ENCODE measurements at regions of chr5 and their contacts with region 1.

Region 1: DNA sequence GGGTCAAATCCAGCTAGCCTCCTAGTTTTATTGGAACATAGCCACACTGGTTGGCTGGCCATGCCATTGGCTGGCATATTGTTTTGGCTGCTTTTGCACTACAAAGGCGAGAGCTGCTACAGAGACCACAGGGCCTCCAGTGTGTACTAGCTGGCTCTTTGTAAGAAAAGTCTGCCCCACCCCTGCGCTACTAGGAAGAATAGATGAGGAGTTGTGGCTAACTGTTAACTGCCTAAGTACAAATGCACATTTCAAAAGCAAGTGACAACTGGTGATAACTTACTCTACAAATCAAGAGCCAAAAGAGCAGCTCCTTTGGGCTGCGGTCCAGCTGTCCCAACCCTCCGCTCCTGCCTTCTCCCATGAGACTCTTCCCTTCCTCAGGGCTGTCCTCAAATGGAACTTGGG is 63.9 kb downstream of the SERINC5 start:
- DNase-seq: peak; percentile 63
- H3K4me3 Mint-ChIP-seq: peak overlapping the region; percentile 61
- H3K27ac Mint-ChIP-seq: peak overlapping the region; percentile 92
- H3K4me1 Mint-ChIP-seq: peaks cover 78% of the 10 kb centered on the region
- H3K27me3 Mint-ChIP-seq: no peaks in the 10 kb centered on the region

Region 2: DNA sequence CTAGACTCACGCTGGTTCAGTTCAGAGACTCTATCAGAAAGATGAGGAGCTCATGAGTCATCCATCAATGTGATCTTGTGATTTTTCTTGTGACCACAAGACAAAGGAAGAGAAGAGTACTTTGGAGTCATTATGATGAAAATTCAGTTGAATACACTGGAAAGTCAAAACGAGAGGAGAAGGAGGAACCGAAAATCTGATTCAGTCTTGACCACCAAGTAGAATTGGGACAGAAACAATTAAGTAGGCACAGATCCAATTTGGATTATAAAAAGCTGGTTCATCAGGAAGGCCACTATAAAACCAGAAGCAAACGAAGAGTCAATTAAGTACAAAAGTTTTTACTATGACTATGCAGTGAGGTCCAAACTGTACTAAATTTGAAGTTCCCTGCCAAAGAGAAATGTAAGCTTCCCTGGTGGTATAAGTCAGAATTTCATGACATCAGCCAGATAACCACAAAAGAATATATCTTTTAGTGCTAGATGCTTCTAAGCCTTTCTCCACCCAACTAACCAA is 66.0 kb before region 1 on chr5:
- CTCF ChIA-PET with region 1: no interaction called
- POLR2A ChIA-PET with region 1: interaction called, 6 read pairs
- intact Hi-C with region 1: loop called (anchors 1 kb)
- DNase-seq: peak; percentile 28
- H3K4me3 Mint-ChIP-seq: peak overlapping the region; percentile 51
- H3K27ac Mint-ChIP-seq: peak overlapping the region; percentile 70
- H3K4me1 Mint-ChIP-seq: peaks cover 52% of the 10 kb centered on the region
- H3K27me3 Mint-ChIP-seq: no peaks in the 10 kb centered on the region

Region 3: DNA sequence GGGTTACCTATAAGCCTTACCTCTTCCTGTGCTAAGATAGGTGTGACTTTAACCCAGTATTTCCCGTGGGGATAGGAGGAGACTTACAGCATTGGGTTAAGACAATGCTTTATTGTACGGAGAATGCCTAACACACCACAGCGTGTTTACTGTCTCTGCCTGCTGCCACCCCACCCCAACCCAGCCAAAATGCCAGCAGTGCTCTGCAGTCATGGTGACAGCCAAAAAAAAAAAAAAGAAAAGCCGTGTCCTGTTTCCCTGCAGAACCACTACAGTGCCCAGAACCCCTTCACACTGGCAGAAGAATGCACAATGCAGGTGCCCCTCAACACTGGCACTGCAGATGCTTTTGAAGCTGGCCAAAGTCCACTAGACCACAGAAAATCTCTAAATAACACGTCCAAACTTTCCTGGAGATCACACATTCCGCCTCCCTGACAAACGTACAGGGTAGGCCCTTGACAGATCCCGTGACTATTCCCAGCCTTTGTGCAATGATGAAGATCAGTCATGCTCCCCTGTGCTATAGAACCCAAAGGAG is 38.3 kb before region 1 on chr5:
- CTCF ChIA-PET with region 1: no interaction called
- POLR2A ChIA-PET with region 1: interaction called, 3 read pairs
- intact Hi-C with region 1: loop called (anchors 2 kb)
- DNase-seq: no peak
- H3K4me3 Mint-ChIP-seq: no peak overlapping the region
- H3K27ac Mint-ChIP-seq: peak overlapping the region; percentile 90
- H3K4me1 Mint-ChIP-seq: peaks cover 60% of the 10 kb centered on the region
- H3K27me3 Mint-ChIP-seq: no peaks in the 10 kb centered on the region

Region 4: DNA sequence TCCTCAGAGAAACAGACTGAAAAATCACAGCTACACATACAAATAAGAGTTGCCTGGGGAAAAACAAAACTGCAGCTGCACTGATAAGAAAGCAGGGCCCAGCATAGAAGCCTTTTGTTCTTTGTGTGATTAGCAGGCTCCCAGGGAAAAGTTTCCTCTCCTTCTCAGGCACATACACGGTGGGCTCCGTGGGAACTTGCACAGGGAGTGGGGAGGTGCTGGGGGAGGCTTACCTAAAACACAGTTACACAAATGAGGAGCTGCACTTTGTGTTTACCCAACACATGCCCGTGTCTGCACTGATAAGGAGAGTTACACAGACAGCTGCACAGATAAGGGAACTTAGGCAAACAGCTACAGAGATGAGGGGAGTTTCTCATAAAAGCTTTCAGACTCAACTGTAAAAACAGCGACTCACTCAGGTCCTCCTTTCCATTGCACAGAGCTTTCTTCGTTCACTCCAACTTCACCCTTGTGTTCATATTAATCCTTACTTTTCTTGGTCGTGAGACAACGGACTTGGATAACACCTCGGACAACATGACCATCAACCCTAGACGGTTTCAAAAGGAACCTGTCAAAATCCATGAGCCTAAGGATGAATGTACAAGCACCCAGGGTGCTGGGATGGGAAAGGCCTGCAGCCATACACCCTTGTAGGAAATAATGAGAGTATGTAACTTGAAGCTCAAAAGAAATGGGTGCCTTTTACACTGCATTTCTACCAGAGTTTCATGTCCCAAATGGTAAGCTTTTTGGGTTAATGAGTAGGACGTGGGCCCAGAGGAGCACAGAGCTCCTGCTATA is 13.0 kb after region 1 on chr5:
- CTCF ChIA-PET with region 1: interaction called, 46 read pairs
- POLR2A ChIA-PET with region 1: interaction called, 36 read pairs
- intact Hi-C with region 1: loop called (anchors 1 kb)
- DNase-seq: peak; percentile 33
- H3K4me3 Mint-ChIP-seq: peak overlapping the region; percentile 24
- H3K27ac Mint-ChIP-seq: peak overlapping the region; percentile 88
- H3K4me1 Mint-ChIP-seq: peaks cover 83% of the 10 kb centered on the region
- H3K27me3 Mint-ChIP-seq: no peaks in the 10 kb centered on the region

Region 5: DNA sequence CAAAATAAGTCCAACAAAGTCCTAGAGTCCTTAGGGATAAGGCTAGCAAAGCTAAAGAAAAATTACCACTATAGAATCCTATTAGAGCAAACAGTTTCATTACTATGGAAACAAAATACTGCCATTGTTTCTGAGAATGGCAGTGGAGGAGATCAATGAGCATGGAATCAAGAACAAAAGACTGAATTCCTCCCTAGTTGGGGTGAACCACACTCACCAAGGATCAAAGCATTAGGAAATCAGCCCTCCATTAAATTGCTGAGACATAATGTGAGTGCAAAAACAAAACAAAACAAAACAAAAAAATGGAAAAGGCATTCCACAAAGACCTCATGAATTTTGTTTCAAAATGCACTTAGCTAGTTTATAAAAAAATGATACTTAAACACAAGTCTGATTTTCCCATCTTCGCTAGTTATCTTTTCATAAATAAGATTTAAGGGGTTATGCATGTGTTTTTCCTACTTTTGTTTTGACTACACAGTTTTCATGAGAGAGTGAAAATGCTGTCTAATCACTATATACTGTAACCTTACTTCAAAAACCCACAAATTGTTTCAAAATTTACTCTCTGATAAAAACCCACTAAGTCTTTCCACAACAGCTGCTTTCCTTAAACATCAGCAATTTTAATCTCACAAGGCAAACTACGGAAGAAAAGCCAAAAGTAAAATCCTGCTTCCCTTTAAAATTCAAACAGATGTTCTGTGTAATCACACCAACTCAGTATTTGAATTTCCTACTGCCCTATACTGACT is 54.2 kb after region 1 on chr5:
- CTCF ChIA-PET with region 1: interaction called, 3 read pairs
- POLR2A ChIA-PET with region 1: interaction called, 70 read pairs
- intact Hi-C with region 1: loop called (anchors 1 kb)
- DNase-seq: no peak
- H3K4me3 Mint-ChIP-seq: peak overlapping the region; percentile 14
- H3K27ac Mint-ChIP-seq: peak overlapping the region; percentile 72
- H3K4me1 Mint-ChIP-seq: peaks cover 66% of the 10 kb centered on the region
- H3K27me3 Mint-ChIP-seq: no peaks in the 10 kb centered on the region